WTC11 (cell line): ENCODE measurements at regions of chr15 and their contacts with region 1.

Region 1: GRCh38 chr15:75201609-75202250 is at the start of gene C15orf39:
- DNase-seq: peak; percentile 72
- ATAC-seq: peak; percentile 37
- H3K4me3 Mint-ChIP-seq: peak within 1 kb of the TSS; percentile 91
- H3K27ac Mint-ChIP-seq: peak within 1 kb of the TSS; percentile 89
- H3K4me1 Mint-ChIP-seq: peaks cover 55% of the 10 kb centered on the region
- H3K27me3 Mint-ChIP-seq: 0 out of 2 replicates have a peak, but pooled peaks cover 2% of the 10 kb centered on the region
- CTCF ChIP-seq: peak; percentile 92
- total RNA-seq, gene C15orf39: 39.9 to 52.8 TPM (median 41.6 TPM) in 3 replicates

Region 2: GRCh38 chr15:75023181-75023871 is 178.4 kb before region 1 on chr15 and contains the start of gene PPCDC:
- CTCF ChIA-PET with region 1: interaction called, 51 read pairs
- POLR2A ChIA-PET with region 1: interaction called, 4 read pairs
- DNase-seq: peak; percentile 97
- ATAC-seq: peak; percentile 99
- H3K4me3 Mint-ChIP-seq: peak within 1 kb of the TSS; percentile 96
- H3K27ac Mint-ChIP-seq: peak within 1 kb of the TSS; percentile 84
- H3K4me1 Mint-ChIP-seq: peaks cover 17% of the 10 kb centered on the region
- H3K27me3 Mint-ChIP-seq: no peaks in the 10 kb centered on the region
- CTCF ChIP-seq: no peak
- total RNA-seq, gene PPCDC: 25.7 to 30.1 TPM (median 27.8 TPM) in 3 replicates

Region 3: DNA sequence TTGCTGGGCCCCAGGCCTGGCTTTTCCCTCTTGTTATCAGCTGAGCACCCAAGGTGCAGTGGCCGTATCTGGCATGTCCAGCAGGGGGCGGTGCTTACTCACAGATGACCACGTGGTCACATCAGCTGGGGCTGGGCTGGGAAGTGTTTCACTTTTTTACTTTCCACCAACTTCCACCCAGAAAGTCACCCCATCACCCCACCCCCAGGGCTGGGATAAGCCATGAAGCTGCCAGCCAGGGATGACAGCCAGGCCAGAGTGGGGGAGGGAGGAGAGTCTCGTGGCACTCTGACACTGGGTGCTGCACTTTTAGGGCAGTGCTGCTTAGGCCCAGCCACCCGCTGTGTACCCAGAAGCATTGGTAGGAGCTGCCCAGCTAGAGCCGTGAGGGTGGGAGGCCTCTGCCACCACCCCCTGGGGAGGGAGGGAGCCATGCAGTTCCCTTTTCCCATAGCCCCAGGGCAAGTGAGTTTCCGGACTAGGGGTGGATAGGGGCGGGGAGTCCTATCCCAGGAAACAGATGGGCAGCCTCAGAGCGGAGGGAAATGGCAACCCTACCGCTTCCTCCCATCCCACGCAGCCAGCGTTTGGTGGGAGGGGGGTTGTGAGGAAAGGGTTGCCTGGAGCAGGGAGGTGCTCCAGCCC is 172.2 kb before region 1 on chr15:
- CTCF ChIA-PET with region 1: interaction called, 51 read pairs
- POLR2A ChIA-PET with region 1: interaction called, 6 read pairs
- DNase-seq: peak; percentile 94
- ATAC-seq: peak; percentile 84
- H3K4me3 Mint-ChIP-seq: no peak overlapping the region
- H3K27ac Mint-ChIP-seq: peak overlapping the region; percentile 90; the same call in 1 of the 2 replicates
- H3K4me1 Mint-ChIP-seq: peaks cover 52% of the 10 kb centered on the region
- H3K27me3 Mint-ChIP-seq: no peaks in the 10 kb centered on the region
- CTCF ChIP-seq: peak; percentile 94

Region 4: DNA sequence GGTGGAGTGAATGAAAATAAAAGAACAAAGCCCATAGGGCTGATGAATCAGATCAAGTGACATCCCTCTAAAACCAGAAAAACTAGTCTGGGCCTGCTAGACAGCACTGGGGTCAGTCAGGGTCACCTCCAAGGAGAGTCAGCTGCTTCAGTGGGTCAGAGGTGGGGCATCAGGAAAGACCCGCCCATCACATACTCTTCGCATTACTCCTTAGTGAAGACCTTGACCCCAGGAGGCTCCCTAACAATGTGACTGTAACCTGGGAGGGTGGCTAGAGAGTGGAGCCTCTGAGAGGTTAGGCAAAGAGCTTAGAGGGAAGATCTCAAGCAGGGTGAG is 165.4 kb before region 1 on chr15:
- CTCF ChIA-PET with region 1: interaction called, 11 read pairs
- POLR2A ChIA-PET with region 1: interaction called, 3 read pairs
- DNase-seq: peak; percentile 76
- ATAC-seq: peak; percentile 98
- H3K4me3 Mint-ChIP-seq: no peak overlapping the region; the same call in 1 of the 2 replicates
- H3K27ac Mint-ChIP-seq: no peak overlapping the region; the same call in 1 of the 2 replicates
- H3K4me1 Mint-ChIP-seq: peaks cover 36% of the 10 kb centered on the region
- H3K27me3 Mint-ChIP-seq: no peaks in the 10 kb centered on the region
- CTCF ChIP-seq: no peak

Region 5: GRCh38 chr15:75042730-75043508 is 158.8 kb before region 1 on chr15:
- CTCF ChIA-PET with region 1: interaction called, 24 read pairs
- POLR2A ChIA-PET with region 1: interaction called, 5 read pairs
- DNase-seq: peak; percentile 66
- ATAC-seq: peak; percentile 85
- H3K4me3 Mint-ChIP-seq: no peak overlapping the region
- H3K27ac Mint-ChIP-seq: no peak overlapping the region
- H3K4me1 Mint-ChIP-seq: peaks cover 7% of the 10 kb centered on the region; the same call in 1 of the 2 replicates
- H3K27me3 Mint-ChIP-seq: no peaks in the 10 kb centered on the region
- CTCF ChIP-seq: 0 out of 2 replicates have a peak, but pooled peaks have one; percentile 12

Region 6: GRCh38 chr15:75182187-75183131 is 19.3 kb before region 1 on chr15:
- CTCF ChIA-PET with region 1: interaction called, 18 read pairs
- POLR2A ChIA-PET with region 1: interaction called, 5 read pairs
- DNase-seq: peak; percentile 36
- ATAC-seq: peak; percentile 36
- H3K4me3 Mint-ChIP-seq: no peak overlapping the region
- H3K27ac Mint-ChIP-seq: no peak overlapping the region
- H3K4me1 Mint-ChIP-seq: peaks cover 48% of the 10 kb centered on the region
- H3K27me3 Mint-ChIP-seq: peaks cover 19% of the 10 kb centered on the region
- CTCF ChIP-seq: no peak

Region 7: GRCh38 chr15:75215107-75216004 is 13.6 kb after region 1 on chr15:
- CTCF ChIA-PET with region 1: interaction called, 10 read pairs
- POLR2A ChIA-PET with region 1: interaction called, 5 read pairs
- DNase-seq: no peak
- ATAC-seq: peak; percentile 9
- H3K4me3 Mint-ChIP-seq: no peak overlapping the region
- H3K27ac Mint-ChIP-seq: no peak overlapping the region
- H3K4me1 Mint-ChIP-seq: peaks cover 25% of the 10 kb centered on the region
- H3K27me3 Mint-ChIP-seq: no peaks in the 10 kb centered on the region; the same call in 1 of the 2 replicates
- CTCF ChIP-seq: no peak

Region 8: DNA sequence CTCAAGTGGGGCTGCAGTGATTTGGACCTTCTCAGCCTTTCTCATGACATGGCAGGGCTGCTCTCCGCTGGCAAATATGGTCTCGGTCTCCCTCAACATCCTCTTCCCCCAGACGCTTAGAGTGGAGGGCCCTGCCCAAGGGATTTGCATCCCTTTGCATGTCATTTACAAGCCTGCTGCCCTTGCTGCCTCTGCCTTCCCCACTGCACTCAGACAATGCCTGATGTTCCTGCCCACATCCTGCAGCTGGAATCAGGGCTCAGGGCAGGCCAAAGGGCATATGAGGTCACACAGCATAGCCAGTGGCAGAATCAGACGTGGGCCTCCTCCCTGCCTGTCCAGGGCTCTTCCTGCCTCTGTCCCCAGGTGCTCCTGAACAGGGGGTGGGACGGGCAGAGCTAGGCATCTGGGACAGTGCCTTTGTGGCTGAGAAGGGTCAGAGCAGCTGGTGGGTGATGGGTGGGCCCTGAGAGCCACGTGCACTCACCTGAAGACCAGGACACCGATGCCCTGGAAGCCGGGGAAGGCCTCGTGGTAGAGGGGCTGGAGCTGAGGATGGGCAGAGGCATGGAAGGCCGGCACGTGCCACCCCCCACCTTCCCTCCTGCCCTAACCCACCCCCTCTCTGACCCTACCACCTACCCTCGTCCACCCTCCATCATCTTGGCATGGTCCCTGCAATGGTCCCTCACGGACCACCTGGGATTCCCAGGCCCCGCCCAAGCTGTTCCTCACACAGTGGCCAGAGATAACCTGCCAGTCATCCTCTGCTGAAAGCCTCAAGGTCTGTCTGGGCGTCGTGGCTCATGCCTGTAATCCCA is 29.0 kb after region 1 on chr15:
- CTCF ChIA-PET with region 1: no interaction called
- POLR2A ChIA-PET with region 1: no interaction called
- DNase-seq: no peak
- ATAC-seq: peak; percentile 59
- H3K4me3 Mint-ChIP-seq: no peak overlapping the region
- H3K27ac Mint-ChIP-seq: no peak overlapping the region
- H3K4me1 Mint-ChIP-seq: peaks cover 11% of the 10 kb centered on the region
- H3K27me3 Mint-ChIP-seq: peaks cover 29% of the 10 kb centered on the region
- CTCF ChIP-seq: no peak